ENCODE measurements at regions of chr7 and their contacts with region 1.

Region 1: GRCh38 chr7:2771274-2771731 is 72.8 kb downstream of the GNA12 start:
- DNase-seq: no peak
- ATAC-seq: no peak
- H3K4me3 Mint-ChIP-seq: no peak overlapping the region
- H3K27ac Mint-ChIP-seq: peak overlapping the region; percentile 80
- H3K4me1 Mint-ChIP-seq: peaks cover 39% of the 10 kb centered on the region
- H3K27me3 Mint-ChIP-seq: no peaks in the 10 kb centered on the region
- CTCF ChIP-seq: no peak

Region 2: DNA sequence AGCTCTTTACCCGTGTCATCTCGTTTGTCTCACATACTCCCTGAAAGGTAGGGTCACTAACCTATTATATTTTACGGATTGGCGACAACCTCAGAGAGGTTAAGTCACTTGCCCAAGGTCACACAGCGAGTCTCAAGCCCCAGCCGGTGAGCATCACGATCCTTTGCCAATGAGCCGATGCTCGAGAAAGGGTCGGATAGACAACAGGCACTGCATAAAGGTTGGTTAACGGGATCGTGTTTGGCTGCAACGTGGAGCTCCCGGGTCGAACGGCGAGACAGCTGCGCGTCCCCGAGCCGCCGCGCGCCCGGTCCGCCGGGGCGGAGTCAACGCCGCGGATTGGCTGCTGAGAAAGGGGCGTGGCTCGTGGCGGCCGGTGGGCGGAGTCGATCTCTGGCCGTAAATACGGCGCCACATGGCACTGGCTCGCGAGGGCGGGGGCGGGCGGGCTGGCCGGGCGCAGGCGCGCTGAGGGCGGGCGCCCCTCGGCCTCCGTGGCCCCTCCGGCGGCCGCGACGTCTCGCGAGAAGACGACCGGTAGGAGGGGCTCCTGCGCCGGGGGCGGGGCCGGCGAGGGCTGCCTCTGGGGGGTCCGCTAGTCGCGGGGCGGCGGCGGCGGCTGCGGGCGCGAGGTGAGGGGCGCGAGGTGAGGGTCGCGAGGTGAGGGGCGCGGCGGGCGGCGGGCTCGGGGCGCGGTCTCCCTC is 368.1 kb before region 1 on chr7 and contains the start of gene CHST12:
- CTCF ChIA-PET with region 1: no interaction called
- POLR2A ChIA-PET with region 1: no interaction called
- intact Hi-C with region 1: no loop called
- DNase-seq: peak; percentile 97
- ATAC-seq: peak; percentile 75
- H3K4me3 Mint-ChIP-seq: peak within 1 kb of the TSS; percentile 79
- H3K27ac Mint-ChIP-seq: peak within 1 kb of the TSS; percentile 74
- H3K4me1 Mint-ChIP-seq: peaks cover 47% of the 10 kb centered on the region
- H3K27me3 Mint-ChIP-seq: peaks cover 2% of the 10 kb centered on the region
- CTCF ChIP-seq: no peak
- total RNA-seq, gene CHST12: 2.9 to 4.7 TPM

Region 3: DNA sequence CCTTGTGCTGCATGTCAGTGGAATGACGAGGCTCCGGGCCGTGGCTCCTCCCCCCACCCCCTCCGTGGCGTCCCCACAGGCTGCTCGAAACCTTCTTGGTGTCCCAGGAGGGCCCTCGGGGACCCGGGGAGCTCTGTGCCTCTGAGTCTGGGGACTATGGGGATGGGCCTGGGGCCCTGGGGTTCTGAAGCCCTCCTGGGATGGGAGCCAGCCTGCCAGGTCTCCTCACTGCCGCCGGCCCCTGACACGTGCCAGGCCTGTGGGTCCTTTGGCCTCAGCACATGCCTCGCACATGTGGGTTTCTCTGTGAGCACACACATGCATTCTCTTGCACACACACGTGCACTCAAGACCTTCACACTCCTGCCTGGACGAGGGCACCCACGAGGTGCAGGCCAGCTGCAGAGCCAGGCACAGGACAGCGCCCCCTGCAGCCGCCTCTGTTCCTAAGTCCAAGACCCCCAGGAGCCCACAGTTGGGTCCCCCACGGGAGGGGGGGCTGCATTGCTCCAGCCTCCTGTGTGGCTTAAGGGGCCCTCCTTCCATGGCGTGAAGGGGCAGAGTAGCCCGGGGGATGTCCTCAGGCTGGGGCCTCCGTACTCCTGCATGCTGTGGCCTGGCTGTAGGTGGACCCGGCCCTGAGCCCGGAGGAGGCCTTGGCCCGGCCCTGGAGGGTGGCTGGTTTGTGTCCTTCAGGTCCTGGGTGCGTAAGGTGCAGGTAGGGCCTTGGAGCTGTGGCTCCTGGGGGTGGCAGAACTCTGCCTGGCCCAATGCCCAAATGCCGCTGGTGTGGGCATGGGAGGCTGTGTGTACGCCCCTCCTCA is 110.5 kb before region 1 on chr7:
- CTCF ChIA-PET with region 1: no interaction called
- POLR2A ChIA-PET with region 1: no interaction called
- intact Hi-C with region 1: no loop called
- DNase-seq: peak; percentile 29
- ATAC-seq: no peak
- H3K4me3 Mint-ChIP-seq: no peak overlapping the region
- H3K27ac Mint-ChIP-seq: no peak overlapping the region
- H3K4me1 Mint-ChIP-seq: peaks cover 2% of the 10 kb centered on the region
- H3K27me3 Mint-ChIP-seq: no peaks in the 10 kb centered on the region
- CTCF ChIP-seq: peak; percentile 48

Region 4: DNA sequence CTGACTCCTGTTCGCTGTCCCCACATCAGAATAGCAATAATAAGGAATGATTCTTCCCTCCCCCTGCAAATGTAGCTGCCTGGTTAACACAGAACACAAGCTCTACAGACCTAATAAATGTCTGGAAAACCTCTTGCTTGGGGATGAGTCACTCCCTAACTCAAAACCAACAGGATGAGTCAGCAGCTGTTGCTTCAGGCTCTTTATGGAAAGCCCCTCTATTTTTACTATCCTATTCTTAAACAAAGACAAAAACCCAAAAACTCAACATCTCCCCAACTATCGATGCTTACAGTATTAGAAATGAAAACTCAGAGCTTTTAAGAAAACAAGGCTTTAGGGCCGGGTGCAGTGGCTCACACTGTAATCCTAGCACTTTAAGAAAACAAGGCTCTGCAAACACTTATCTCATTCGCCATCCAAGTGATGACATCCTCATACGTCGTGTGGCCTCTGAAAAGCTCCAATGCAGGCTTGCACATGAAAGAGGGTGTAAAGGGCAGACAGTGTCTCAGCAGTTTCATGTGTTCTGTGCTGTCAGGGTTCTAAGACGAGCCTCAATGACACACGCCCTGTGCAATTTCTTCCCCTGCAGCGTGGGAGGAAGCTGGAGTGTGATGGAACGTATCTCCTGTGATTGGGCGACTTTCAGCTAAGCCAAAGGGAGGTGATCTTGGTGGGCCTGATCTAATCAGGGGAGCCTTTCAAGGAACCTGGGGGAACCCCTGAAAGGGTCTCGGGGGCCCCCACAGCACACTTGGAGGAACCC is 13.2 kb before region 1 on chr7:
- CTCF ChIA-PET with region 1: interaction called, 17 read pairs
- POLR2A ChIA-PET with region 1: interaction called, 13 read pairs
- intact Hi-C with region 1: no loop called
- DNase-seq: peak; percentile 92
- ATAC-seq: peak; percentile 96
- H3K4me3 Mint-ChIP-seq: peak overlapping the region; percentile 67
- H3K27ac Mint-ChIP-seq: peak overlapping the region; percentile 98
- H3K4me1 Mint-ChIP-seq: peaks cover 43% of the 10 kb centered on the region
- H3K27me3 Mint-ChIP-seq: no peaks in the 10 kb centered on the region
- CTCF ChIP-seq: no peak

Region 5: GRCh38 chr7:2978403-2978802 is 207.1 kb after region 1 on chr7:
- CTCF ChIA-PET with region 1: no interaction called
- POLR2A ChIA-PET with region 1: no interaction called
- intact Hi-C with region 1: no loop called
- DNase-seq: peak; percentile 98
- ATAC-seq: peak; percentile 87
- H3K4me3 Mint-ChIP-seq: peak overlapping the region; percentile 78
- H3K27ac Mint-ChIP-seq: peak overlapping the region; percentile 93
- H3K4me1 Mint-ChIP-seq: peaks cover 67% of the 10 kb centered on the region
- H3K27me3 Mint-ChIP-seq: no peaks in the 10 kb centered on the region
- CTCF ChIP-seq: no peak

Measured in activated CD8-positive, alpha-beta T cell treated with anti-CD3 and anti-CD28 coated beads for 36 hours (primary cell).